Head of caudate nucleus (tissue), 42 donors: ENCODE measurements at regions of chr21 and their contacts with region 1.

Region 1: DNA sequence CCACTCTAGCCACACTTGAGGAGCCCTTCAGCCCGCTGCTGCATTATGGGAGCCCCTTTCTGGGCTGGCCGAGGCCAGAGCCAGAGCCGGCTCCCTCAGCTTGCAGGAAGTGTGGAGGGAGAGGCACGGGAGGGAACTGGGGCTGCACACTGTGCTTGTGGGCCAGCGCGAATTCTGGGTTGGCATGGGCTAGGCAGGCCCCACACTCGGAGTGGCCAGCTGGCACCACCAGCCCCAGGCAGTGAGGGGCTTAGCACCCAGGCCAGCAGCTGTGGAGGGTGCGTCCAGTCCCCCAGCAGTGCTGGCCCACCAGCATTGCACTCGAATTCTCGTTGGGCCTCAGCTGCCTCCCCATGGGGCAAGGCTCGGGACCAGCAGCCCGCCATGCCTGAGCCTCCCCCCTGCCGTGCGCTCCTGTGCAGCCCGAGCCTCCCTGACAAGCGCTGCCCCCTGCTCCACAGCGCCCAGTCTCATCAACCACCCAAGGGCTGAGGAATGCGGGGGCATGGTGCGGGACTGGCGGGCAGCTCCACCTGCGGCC is 785.9 kb upstream of the TPTE start:
- DNase-seq: no peak

Region 2: DNA sequence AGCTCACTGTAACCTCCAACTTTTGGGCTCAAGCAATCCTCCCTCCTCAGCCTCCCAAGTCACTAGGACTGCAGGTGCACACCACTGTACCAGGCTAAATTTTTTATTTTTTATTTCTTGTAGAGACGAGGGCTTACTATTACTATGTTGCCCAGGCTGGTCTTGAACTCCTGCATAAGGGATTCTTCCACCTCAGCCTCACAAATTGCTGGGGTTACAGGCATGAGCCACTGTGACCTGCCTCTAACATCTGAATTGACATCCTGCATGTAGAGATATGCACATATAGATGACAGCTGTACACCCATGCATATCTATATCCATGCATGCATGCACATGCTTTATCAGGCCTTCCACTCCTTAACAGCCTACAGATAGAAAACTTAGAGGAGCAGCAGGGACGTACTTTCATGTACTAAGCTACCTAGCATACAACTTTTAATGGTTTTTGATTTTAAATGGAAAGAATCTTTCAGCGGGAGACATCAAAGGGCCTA is 45.0 kb after region 1 on chr21:
- intact Hi-C with region 1: loop called (anchors 10 kb)
- DNase-seq: no peak

Region 3: DNA sequence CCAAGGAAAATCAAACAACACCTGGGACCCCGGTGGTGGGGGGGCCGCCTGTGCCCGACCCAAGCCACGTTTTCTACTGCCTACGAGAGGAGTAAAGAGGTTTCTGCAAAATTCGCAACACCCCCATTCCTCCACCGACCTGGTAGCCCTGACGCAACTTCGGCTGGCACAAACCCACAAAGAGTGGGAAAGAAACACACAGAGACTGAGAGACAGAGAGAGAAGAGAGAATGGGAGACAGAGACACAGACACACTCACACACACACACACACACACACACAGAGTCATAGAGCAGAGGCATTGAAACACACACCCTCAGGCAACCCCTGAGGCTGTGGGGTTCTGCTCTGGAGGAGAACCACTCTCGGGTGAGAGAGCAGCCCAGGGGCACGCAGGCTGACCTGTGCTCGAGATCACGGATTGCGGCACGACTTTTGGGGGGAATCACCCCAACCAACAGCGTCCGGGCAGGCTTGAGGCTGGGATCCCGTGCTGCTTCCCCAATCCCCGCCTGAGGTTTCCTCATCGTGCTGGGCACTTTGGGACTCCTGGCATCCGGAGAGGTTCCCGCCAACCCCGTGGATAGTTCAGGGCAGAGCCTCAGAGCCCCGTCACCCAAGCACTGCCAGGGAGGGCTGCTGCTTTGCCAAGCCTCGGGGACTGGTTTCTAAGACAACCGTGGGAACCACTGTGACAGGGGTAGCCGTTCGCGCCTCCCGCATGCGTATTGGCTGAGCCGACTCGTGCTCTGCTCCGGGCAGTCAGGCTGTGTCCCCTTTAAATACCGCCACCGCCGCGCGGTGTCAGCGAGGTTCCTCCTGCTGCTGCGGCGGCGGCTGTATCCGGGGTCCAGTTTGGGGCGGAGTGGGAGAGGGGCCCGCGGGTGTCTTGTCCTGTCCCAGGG is 103.5 kb after region 1 on chr21:
- intact Hi-C with region 1: no loop called
- DNase-seq: peak in 10 of 42 donors; percentile 9 to 58 (median 30)